Activated CD4-positive, alpha-beta T cell treated with anti-CD3 and anti-CD28 coated beads for 36 hours (primary cell): ENCODE measurements at regions of chr10 and their contacts with region 1.

Region 1: DNA sequence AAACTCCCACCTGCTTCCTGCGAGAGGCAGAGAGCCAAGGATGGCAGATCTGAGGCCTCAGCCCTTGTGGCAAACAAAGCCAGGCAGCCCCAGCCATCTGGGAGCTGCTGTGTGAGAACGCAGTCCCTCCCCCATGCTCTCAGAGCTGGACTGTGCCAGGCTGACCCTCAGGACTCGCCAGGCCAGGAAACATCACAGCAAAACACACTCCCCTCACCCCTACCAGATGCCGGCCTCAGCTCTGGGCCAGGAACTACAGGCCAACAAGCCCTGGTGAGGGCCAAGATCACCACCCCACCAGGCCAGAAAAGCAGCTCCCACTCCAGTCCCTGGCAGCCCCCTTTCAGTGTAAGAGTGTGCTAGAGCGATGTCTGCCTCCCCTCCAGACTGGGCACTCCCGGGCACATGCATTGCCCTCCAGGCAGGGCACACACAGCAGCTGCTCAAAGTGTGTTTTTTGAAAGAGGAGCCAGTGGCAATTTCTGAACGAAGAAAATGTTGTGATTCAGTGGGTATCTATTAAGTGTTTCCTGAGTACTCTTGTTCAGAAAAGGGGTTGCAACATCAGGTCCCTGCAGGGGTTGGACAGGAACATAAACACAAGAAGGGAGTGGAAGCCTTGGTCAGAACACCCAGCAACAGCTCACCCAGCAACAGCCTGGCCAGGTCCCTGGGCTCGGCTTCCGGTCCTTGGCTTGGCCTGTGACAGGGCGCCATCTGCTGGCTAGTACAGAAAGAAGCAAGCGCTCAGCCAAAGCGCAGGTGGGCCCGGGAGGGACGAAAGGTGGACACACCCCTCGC is 18.3 kb downstream of the LRRC20 start:
- DNase-seq: peak; percentile 93
- ATAC-seq: peak; percentile 100
- H3K4me3 Mint-ChIP-seq: no peak overlapping the region
- H3K27ac Mint-ChIP-seq: no peak overlapping the region
- H3K4me1 Mint-ChIP-seq: peaks cover 6% of the 10 kb centered on the region
- H3K27me3 Mint-ChIP-seq: no peaks in the 10 kb centered on the region

Region 2: GRCh38 chr10:69318106-69318866 is 1045.9 kb before region 1 on chr10:
- CTCF ChIA-PET with region 1: no interaction called
- POLR2A ChIA-PET with region 1: no interaction called
- intact Hi-C with region 1: no loop called
- DNase-seq: peak; percentile 96
- ATAC-seq: peak; percentile 88
- H3K4me3 Mint-ChIP-seq: peak overlapping the region; percentile 86
- H3K27ac Mint-ChIP-seq: peak overlapping the region; percentile 92
- H3K4me1 Mint-ChIP-seq: peaks cover 53% of the 10 kb centered on the region
- H3K27me3 Mint-ChIP-seq: no peaks in the 10 kb centered on the region

Region 3: DNA sequence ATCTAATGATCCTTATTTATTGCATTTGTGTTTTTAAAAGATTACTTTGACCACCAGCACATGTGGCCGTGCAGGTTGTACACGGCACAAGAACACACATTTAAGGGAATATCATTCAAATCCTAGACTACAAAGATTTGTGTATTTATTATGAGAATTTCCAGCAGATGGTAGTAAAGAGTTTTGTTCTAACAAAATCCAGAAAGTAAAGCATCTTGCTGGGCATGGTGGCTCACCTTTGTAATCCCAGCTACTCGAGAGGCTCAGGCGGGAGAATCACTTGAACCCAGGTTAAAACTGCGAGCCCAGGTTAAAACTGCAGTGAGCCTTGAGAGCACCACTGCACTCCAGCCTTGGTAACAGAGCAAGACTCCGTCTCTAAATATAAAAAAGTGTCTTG is 280.0 kb before region 1 on chr10:
- CTCF ChIA-PET with region 1: no interaction called
- POLR2A ChIA-PET with region 1: no interaction called
- intact Hi-C with region 1: loop called in 1 of 2 experiments (anchors 1 kb)
- DNase-seq: no peak
- ATAC-seq: no peak
- H3K4me3 Mint-ChIP-seq: no peak overlapping the region
- H3K27ac Mint-ChIP-seq: no peak overlapping the region
- H3K4me1 Mint-ChIP-seq: no peaks in the 10 kb centered on the region
- H3K27me3 Mint-ChIP-seq: no peaks in the 10 kb centered on the region

Region 4: DNA sequence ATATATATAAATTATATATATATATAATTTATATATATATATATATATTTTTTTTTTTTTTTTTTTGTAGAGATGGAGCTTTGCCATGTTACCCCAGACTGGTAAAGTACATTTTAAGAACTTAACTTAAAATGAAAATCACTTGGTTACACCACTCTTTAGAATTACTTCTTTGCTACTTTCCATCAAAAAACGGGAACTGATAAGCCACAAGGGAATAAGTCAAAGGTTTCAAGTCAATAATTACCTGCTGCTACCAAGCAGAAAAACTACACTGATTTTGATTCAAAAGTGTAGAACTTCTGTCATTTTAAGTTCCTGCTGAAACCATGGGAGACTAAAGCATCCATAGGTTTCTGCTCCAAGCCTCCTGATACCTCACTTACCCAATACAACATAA is 143.1 kb before region 1 on chr10:
- CTCF ChIA-PET with region 1: interaction called, 220 read pairs
- POLR2A ChIA-PET with region 1: interaction called, 14 read pairs
- intact Hi-C with region 1: loop called (anchors 1 kb)
- DNase-seq: no peak
- ATAC-seq: no peak
- H3K4me3 Mint-ChIP-seq: no peak overlapping the region
- H3K27ac Mint-ChIP-seq: no peak overlapping the region
- H3K4me1 Mint-ChIP-seq: peaks cover 36% of the 10 kb centered on the region
- H3K27me3 Mint-ChIP-seq: no peaks in the 10 kb centered on the region

Region 5: GRCh38 chr10:70233109-70233938 is 130.8 kb before region 1 on chr10 and contains the start of gene PPA1:
- CTCF ChIA-PET with region 1: interaction called, 13 read pairs
- POLR2A ChIA-PET with region 1: no interaction called
- intact Hi-C with region 1: no loop called
- DNase-seq: peak; percentile 100
- ATAC-seq: peak; percentile 91
- H3K4me3 Mint-ChIP-seq: peak within 1 kb of the TSS; percentile 83
- H3K27ac Mint-ChIP-seq: peak within 1 kb of the TSS; percentile 89
- H3K4me1 Mint-ChIP-seq: peaks cover 31% of the 10 kb centered on the region
- H3K27me3 Mint-ChIP-seq: no peaks in the 10 kb centered on the region
- total RNA-seq, gene PPA1: 286 to 328 TPM

Region 6: GRCh38 chr10:70272925-70273316 is 91.2 kb before region 1 on chr10:
- CTCF ChIA-PET with region 1: interaction called, 15 read pairs
- POLR2A ChIA-PET with region 1: interaction called, 4 read pairs
- intact Hi-C with region 1: loop called in 1 of 2 experiments (anchors 1 kb)
- DNase-seq: peak; percentile 20
- ATAC-seq: peak; percentile 92
- H3K4me3 Mint-ChIP-seq: no peak overlapping the region
- H3K27ac Mint-ChIP-seq: no peak overlapping the region
- H3K4me1 Mint-ChIP-seq: peaks cover 23% of the 10 kb centered on the region
- H3K27me3 Mint-ChIP-seq: no peaks in the 10 kb centered on the region

Region 7: DNA sequence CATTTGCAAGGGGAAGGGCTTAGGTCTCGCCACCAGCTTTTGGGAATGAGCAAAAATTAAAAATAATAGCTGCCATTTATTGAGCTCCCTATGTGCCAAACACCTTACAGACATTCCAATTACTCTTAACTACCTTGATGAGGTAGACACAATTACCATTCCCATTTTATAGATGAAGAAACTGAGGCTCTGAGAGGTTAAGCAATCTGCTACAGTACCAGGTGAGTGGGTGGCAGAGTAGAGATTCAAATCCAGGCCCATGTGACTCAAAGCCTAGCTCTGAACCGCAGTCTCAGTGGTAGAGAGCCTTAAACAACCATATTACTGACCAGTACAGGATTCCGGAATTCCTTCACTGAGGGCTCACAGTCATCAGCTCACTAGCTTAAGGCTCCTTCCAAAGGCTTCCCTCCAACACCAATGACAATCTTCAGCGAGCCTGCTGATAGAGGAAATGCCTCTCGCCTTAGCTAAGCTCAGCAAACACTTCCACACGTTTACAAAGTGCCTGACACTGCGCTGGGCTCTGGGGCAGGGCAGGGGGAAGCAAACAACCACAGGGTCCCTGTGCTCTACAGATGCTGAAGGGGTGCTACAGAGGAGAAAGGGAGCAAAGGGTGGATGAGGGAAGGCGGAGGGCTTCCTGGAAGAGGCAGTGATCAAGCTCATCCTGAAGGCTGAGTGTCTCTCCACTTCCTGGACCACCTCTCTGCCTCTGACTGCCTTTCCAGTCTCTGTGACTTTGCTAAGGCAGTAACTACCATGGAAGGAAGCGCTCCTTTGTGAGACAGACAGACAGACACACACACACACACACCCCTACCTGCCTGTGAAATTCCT is 10.8 kb after region 1 on chr10:
- CTCF ChIA-PET with region 1: interaction called, 26 read pairs
- POLR2A ChIA-PET with region 1: no interaction called
- intact Hi-C with region 1: no loop called
- DNase-seq: no peak
- ATAC-seq: no peak
- H3K4me3 Mint-ChIP-seq: no peak overlapping the region
- H3K27ac Mint-ChIP-seq: no peak overlapping the region
- H3K4me1 Mint-ChIP-seq: no peaks in the 10 kb centered on the region
- H3K27me3 Mint-ChIP-seq: no peaks in the 10 kb centered on the region

Region 8: GRCh38 chr10:70404036-70404786 is 40.0 kb after region 1 on chr10 and contains the start of gene EIF4EBP2:
- CTCF ChIA-PET with region 1: interaction called, 10 read pairs
- POLR2A ChIA-PET with region 1: no interaction called
- intact Hi-C with region 1: no loop called
- DNase-seq: peak; percentile 99
- ATAC-seq: peak; percentile 91
- H3K4me3 Mint-ChIP-seq: peak within 1 kb of the TSS; percentile 94
- H3K27ac Mint-ChIP-seq: peak within 1 kb of the TSS; percentile 91
- H3K4me1 Mint-ChIP-seq: peaks cover 37% of the 10 kb centered on the region
- H3K27me3 Mint-ChIP-seq: no peaks in the 10 kb centered on the region
- total RNA-seq, gene EIF4EBP2: 24.4 to 27.7 TPM

Region 9: DNA sequence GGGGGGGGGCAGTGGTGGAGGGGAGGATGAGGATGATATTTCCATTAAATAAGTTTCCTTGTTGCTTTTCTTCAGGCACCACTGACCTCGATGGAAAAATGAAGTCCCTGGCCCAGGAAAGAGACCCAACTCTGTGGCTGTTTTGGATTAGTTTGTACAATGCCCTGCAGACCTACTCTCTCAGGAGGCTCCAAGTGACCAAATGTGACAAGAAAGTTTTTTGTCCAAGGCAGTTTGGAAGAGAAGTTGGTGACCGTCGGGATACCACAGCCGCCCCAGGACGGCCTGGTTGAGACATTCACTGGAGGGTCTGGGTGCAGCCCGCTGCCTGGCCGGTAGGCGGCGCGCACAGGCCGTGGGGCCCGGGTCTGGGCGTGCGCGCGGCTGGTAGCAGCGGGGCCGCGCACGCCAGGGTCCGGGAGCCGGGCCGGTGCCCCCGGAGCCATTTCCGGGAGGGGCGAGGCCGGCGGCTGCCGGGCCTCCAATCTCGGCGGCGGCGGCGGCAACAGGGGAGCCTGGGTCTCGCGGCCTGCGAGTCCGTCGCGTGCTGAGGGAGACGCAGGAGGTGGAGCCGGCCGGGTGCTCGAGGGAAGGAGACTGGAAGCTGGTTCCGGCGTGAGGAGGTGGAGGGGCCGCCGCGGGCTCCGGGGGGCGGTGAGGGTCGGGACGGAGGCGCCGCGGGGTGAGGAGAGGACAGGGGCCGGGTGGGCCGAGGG is 451.5 kb after region 1 on chr10 and contains the start of gene SGPL1:
- CTCF ChIA-PET with region 1: no interaction called
- POLR2A ChIA-PET with region 1: no interaction called
- intact Hi-C with region 1: no loop called
- DNase-seq: peak; percentile 92
- ATAC-seq: peak; percentile 82
- H3K4me3 Mint-ChIP-seq: peak within 1 kb of the TSS; percentile 83
- H3K27ac Mint-ChIP-seq: peak within 1 kb of the TSS; percentile 84
- H3K4me1 Mint-ChIP-seq: peaks cover 38% of the 10 kb centered on the region
- H3K27me3 Mint-ChIP-seq: no peaks in the 10 kb centered on the region
- total RNA-seq, gene SGPL1: 33.7 to 48.7 TPM